CD4-positive, alpha-beta memory T cell (primary cell): ENCODE measurements at regions of chr19 and their contacts with region 1.

Region 1: GRCh38 chr19:46932346-46932745 is 71.5 kb downstream of the ARHGAP35 start:
- DNase-seq: no peak
- H3K4me3 ChIP-seq: no peak overlapping the region
- H3K4me3 Mint-ChIP-seq: no peak overlapping the region
- H3K27ac ChIP-seq: no peak overlapping the region
- H3K27ac Mint-ChIP-seq: peak overlapping the region; percentile 23 to 92 (median 84)
- H3K4me1 ChIP-seq: peaks cover 81% of the 10 kb centered on the region
- H3K4me1 Mint-ChIP-seq: peaks cover 60 to 88% (median 76%) of the 10 kb centered on the region in 4 donors
- H3K27me3 ChIP-seq: no peaks in the 10 kb centered on the region
- H3K27me3 Mint-ChIP-seq: no peaks in the 10 kb centered on the region

Region 2: DNA sequence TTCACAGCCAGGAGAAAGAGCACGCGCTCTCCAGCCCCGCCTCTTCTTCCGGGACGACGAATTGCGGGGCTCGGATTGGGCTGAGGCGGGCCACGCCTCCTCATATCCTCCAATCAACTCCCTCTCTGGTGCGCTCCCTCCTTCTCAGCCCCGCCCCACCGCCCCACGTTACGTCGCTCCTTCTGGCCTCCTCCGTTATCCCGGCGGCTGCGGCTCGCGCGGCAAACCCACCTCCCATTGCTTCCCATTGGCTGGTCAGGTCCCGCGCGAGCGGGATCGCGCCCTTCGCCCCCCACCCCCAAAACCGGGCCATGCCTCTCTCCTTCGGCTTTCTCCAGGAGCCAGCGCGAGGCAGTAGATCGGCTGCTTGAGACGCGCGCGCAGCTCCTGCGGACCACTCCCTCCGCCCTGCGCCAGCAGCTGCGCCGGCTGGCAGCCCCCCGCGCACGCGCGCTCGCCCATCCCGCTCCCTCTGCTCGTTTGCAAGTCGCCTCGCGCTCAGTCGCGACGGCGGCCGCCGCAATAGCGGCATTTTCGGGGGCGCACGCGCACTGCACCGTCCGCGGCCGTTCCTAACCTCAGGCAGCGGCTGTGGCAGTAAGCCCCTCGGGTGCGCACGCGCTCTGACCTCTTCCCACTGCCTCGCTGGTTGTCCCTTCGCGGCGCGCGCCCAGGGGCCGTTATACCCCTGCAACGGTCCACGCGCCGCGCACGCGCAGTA is 72.1 kb before region 1 on chr19:
- CTCF ChIA-PET with region 1: interaction called, 3 read pairs
- POLR2A ChIA-PET with region 1: interaction called, 6 read pairs
- intact Hi-C with region 1: loop called (anchors 5 kb)
- DNase-seq: peak; percentile 93 to 96 (median 94)
- H3K4me3 ChIP-seq: peak overlapping the region; percentile 42 to 78
- H3K4me3 Mint-ChIP-seq: peak overlapping the region; percentile 91 to 98 (median 95)
- H3K27ac ChIP-seq: peak overlapping the region; percentile 79
- H3K27ac Mint-ChIP-seq: peak overlapping the region; percentile 94 to 99 (median 97)
- H3K4me1 ChIP-seq: peaks cover 62% of the 10 kb centered on the region
- H3K4me1 Mint-ChIP-seq: peaks cover 19 to 22% (median 19%) of the 10 kb centered on the region in 4 donors
- H3K27me3 ChIP-seq: no peaks in the 10 kb centered on the region
- H3K27me3 Mint-ChIP-seq: no peaks in the 10 kb centered on the region

Region 3: GRCh38 chr19:46967578-46968027 is 35.3 kb after region 1 on chr19:
- CTCF ChIA-PET with region 1: interaction called, 4 read pairs
- POLR2A ChIA-PET with region 1: interaction called, 15 read pairs
- intact Hi-C with region 1: loop called (anchors 5 kb)
- DNase-seq: peak; percentile 36 to 59 (median 48)
- H3K4me3 ChIP-seq: peak overlapping the region; percentile 22 to 32
- H3K4me3 Mint-ChIP-seq: peak overlapping the region; percentile 33 to 83 (median 68)
- H3K27ac ChIP-seq: peak overlapping the region; percentile 18
- H3K27ac Mint-ChIP-seq: peak overlapping the region; percentile 4 to 89 (median 80)
- H3K4me1 ChIP-seq: peaks cover 40% of the 10 kb centered on the region
- H3K4me1 Mint-ChIP-seq: peaks cover 26 to 55% (median 39%) of the 10 kb centered on the region in 4 donors
- H3K27me3 ChIP-seq: no peaks in the 10 kb centered on the region
- H3K27me3 Mint-ChIP-seq: no peaks in the 10 kb centered on the region

Region 4: DNA sequence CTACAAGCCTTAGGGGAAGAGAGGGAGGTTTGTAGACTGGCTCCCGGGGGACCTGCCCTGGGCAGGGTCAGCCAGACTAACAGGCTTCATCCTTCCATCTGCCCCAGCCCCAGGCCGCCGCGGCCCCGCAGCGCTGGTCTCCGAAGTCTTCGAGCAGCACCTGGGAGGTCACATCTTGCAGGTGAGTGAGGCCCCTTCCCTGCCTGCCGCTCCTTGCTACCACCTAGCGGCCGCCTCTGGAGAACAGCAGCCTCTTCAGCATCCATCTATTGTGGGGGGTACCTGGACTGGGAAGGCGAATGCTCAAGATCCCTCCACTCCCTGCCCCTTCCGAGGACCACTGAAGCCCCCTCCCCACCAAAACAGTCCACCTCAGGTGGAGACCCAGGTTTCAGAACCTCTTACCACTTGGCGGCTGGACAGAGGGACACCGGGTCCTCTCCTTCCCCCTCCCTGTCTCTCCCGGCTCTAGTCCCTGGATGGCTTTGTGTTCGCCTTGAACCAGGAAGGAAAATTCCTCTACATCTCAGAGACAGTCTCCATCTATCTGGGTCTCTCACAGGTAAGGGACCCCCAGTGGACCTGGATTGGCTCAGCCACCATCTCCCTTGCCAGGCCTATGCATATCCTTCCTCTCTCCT is 99.9 kb after region 1 on chr19:
- CTCF ChIA-PET with region 1: no interaction called
- POLR2A ChIA-PET with region 1: no interaction called
- intact Hi-C with region 1: no loop called
- DNase-seq: peak; percentile 55 to 66 (median 64)
- H3K4me3 ChIP-seq: no peak overlapping the region
- H3K4me3 Mint-ChIP-seq: peak overlapping the region in 1 of 8 donors; percentile 3
- H3K27ac ChIP-seq: no peak overlapping the region
- H3K27ac Mint-ChIP-seq: no peak overlapping the region
- H3K4me1 ChIP-seq: peaks cover 23% of the 10 kb centered on the region
- H3K4me1 Mint-ChIP-seq: peaks cover 9 to 32% (median 18%) of the 10 kb centered on the region in 4 donors
- H3K27me3 ChIP-seq: peaks cover 13% of the 10 kb centered on the region
- H3K27me3 Mint-ChIP-seq: peaks cover 22 to 33% of the 10 kb centered on the region in 2 donors